Activated CD8-positive, alpha-beta T cell treated with anti-CD3 and anti-CD28 coated beads, Interleukin-2, amount 10 ng/mL, durations not matched to agents 7 days and 5 days (primary cell): ENCODE measurements at regions of chr4 and their contacts with region 1.

Region 1: GRCh38 chr4:147866532-147867271 is 134.8 kb downstream of the ARHGAP10 start:
- DNase-seq: peak; percentile 96
- ATAC-seq: peak; percentile 98
- H3K4me3 Mint-ChIP-seq: no peak overlapping the region
- H3K27ac Mint-ChIP-seq: no peak overlapping the region
- H3K4me1 Mint-ChIP-seq: peaks cover 3% of the 10 kb centered on the region
- H3K27me3 Mint-ChIP-seq: no peaks in the 10 kb centered on the region

Region 2: DNA sequence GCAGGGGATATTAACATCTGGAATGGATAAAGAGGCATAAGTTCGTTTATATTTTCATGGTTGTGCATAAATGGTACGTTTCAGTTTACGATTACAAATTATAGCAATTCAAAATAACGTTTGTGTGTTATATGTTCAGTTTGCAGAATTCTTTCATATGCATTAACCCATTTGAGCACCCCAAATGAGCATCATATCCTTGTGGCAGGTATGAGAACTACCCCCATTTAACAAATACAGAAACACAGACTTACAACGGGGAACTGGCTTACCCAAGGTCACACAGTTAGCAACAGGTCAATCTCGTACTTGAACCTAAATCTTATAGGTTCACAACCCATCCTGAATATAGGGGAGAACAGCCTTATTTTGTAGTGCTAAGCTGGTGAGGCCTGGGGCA is 352.8 kb before region 1 on chr4:
- CTCF ChIA-PET with region 1: interaction called, 55 read pairs
- POLR2A ChIA-PET with region 1: no interaction called
- DNase-seq: no peak
- ATAC-seq: no peak
- H3K4me3 Mint-ChIP-seq: no peak overlapping the region
- H3K27ac Mint-ChIP-seq: no peak overlapping the region
- H3K4me1 Mint-ChIP-seq: no peaks in the 10 kb centered on the region
- H3K27me3 Mint-ChIP-seq: peaks cover 14% of the 10 kb centered on the region

Region 3: DNA sequence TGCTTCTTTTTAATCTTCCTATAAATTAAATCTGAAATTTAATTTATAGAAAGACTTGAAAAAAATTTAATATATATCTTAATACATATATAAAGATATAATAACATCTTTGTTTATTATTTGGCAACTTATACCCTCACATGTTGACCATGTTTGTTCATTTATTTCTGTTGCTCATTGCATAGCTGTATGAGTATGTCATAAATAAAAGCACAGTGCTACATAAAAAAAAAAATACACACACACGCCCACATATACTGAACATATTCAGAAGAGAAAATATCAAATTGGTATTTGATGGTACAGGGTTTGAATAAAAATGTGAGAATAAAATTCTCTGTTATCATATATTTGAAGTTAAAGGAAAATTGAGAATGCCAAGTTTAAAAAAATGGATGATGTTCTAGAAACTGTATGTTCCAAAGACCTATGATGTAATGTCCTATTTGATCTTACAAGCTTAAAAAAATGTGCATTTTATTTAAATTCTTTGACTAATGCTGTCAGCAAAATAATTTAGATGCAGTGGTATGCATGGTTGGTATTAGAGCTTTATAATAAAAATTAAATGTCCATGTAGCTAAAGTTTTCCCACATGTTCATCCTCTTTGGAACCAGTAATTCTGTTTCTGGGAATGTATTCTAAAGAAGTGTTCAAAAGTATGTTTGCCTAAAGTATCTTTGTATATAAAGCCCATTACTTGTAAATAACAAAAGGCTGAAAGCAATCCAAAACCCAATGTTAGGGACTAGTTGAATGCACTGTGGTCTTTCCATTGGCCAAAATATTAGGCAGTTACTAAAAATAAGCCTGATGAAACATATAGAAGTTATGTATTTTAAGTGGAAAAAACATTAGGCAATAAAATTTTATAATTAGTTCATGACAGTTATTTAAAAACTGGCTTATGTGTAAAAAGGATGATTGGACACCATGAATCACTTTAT is 236.6 kb before region 1 on chr4:
- CTCF ChIA-PET with region 1: interaction called, 20 read pairs
- POLR2A ChIA-PET with region 1: no interaction called
- DNase-seq: no peak
- ATAC-seq: no peak
- H3K4me3 Mint-ChIP-seq: no peak overlapping the region
- H3K27ac Mint-ChIP-seq: no peak overlapping the region
- H3K4me1 Mint-ChIP-seq: no peaks in the 10 kb centered on the region
- H3K27me3 Mint-ChIP-seq: no peaks in the 10 kb centered on the region

Region 4: GRCh38 chr4:147689067-147689466 is 177.6 kb before region 1 on chr4:
- CTCF ChIA-PET with region 1: interaction called, 43 read pairs
- POLR2A ChIA-PET with region 1: no interaction called
- DNase-seq: peak; percentile 79
- ATAC-seq: peak; percentile 72
- H3K4me3 Mint-ChIP-seq: peak overlapping the region; percentile 59
- H3K27ac Mint-ChIP-seq: peak overlapping the region; percentile 86
- H3K4me1 Mint-ChIP-seq: peaks cover 42% of the 10 kb centered on the region
- H3K27me3 Mint-ChIP-seq: peaks cover 5% of the 10 kb centered on the region

Region 5: GRCh38 chr4:147741190-147741785 is 125.4 kb before region 1 on chr4:
- CTCF ChIA-PET with region 1: interaction called, 20 read pairs
- POLR2A ChIA-PET with region 1: no interaction called
- DNase-seq: no peak
- ATAC-seq: peak; percentile 11
- H3K4me3 Mint-ChIP-seq: no peak overlapping the region
- H3K27ac Mint-ChIP-seq: no peak overlapping the region
- H3K4me1 Mint-ChIP-seq: peaks cover 25% of the 10 kb centered on the region
- H3K27me3 Mint-ChIP-seq: peaks cover 3% of the 10 kb centered on the region

Region 6: GRCh38 chr4:147816382-147817254 is 50.1 kb before region 1 on chr4:
- CTCF ChIA-PET with region 1: interaction called, 19 read pairs
- POLR2A ChIA-PET with region 1: no interaction called
- DNase-seq: no peak
- ATAC-seq: no peak
- H3K4me3 Mint-ChIP-seq: no peak overlapping the region
- H3K27ac Mint-ChIP-seq: no peak overlapping the region
- H3K4me1 Mint-ChIP-seq: peaks cover 16% of the 10 kb centered on the region
- H3K27me3 Mint-ChIP-seq: peaks cover 3% of the 10 kb centered on the region

Region 7: DNA sequence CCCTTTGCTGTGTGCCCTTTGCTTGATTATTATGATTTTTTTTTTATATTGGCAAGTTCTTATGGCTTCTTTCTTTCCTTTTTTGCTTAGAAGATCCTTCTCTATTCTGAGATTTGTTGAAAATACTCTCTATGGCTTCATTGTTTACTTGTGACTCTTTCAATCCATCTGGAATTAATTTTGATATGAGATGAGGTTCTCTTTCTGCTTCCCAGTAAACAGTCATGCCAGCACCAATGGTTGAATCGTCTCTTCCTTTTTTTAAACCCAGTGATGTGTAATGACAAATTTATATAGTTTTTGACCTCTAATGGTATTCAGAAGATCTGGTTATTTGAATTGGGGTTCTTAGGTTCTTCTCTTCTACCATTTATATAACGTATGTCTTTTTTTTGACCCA is 13.0 kb before region 1 on chr4:
- CTCF ChIA-PET with region 1: interaction called, 80 read pairs
- POLR2A ChIA-PET with region 1: no interaction called
- DNase-seq: no peak
- ATAC-seq: no peak
- H3K4me3 Mint-ChIP-seq: no peak overlapping the region
- H3K27ac Mint-ChIP-seq: no peak overlapping the region
- H3K4me1 Mint-ChIP-seq: no peaks in the 10 kb centered on the region
- H3K27me3 Mint-ChIP-seq: peaks cover 7% of the 10 kb centered on the region

Region 8: GRCh38 chr4:147960971-147961370 is 94.3 kb after region 1 on chr4:
- CTCF ChIA-PET with region 1: no interaction called
- POLR2A ChIA-PET with region 1: no interaction called
- DNase-seq: no peak
- ATAC-seq: no peak
- H3K4me3 Mint-ChIP-seq: no peak overlapping the region
- H3K27ac Mint-ChIP-seq: no peak overlapping the region
- H3K4me1 Mint-ChIP-seq: no peaks in the 10 kb centered on the region
- H3K27me3 Mint-ChIP-seq: peaks cover 2% of the 10 kb centered on the region

Region 9: GRCh38 chr4:148065075-148065474 is 198.4 kb after region 1 on chr4:
- CTCF ChIA-PET with region 1: no interaction called
- POLR2A ChIA-PET with region 1: no interaction called
- DNase-seq: no peak
- ATAC-seq: no peak
- H3K4me3 Mint-ChIP-seq: no peak overlapping the region
- H3K27ac Mint-ChIP-seq: no peak overlapping the region
- H3K4me1 Mint-ChIP-seq: peaks cover 18% of the 10 kb centered on the region
- H3K27me3 Mint-ChIP-seq: no peaks in the 10 kb centered on the region

Region 10: GRCh38 chr4:148243837-148244236 is 377.1 kb after region 1 on chr4:
- CTCF ChIA-PET with region 1: no interaction called
- POLR2A ChIA-PET with region 1: no interaction called
- DNase-seq: no peak
- ATAC-seq: no peak
- H3K4me3 Mint-ChIP-seq: no peak overlapping the region
- H3K27ac Mint-ChIP-seq: no peak overlapping the region
- H3K4me1 Mint-ChIP-seq: peaks cover 6% of the 10 kb centered on the region
- H3K27me3 Mint-ChIP-seq: no peaks in the 10 kb centered on the region